ENCODE measurements at regions of chr3 and their contacts with region 1.

Region 1: DNA sequence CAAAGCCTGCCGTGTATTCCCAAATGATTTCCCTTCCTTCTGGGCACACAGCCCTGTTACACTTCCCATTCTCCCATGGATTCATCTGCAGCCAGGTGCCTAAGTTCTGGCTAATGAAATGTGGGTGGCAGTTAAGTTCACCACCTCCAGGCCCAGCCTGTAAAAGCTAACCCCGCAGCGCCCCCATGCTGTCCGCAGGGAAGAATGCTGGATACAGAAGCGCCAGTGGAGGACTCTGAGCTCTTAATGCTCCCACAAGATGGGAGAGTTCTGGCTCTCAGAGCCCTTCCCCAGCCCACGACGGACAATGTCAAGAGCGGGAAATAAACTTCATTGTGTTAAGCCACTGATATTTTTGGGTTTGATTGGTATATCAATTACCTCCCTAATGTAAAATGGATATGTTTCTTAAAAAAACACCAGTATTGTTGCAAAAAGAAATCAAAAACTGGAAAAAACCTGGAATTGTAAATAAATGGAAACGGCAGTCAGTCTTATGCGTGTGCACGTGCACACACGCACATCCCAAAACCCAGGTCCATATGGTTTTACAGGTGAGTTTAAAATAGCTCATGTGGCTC is 37.7 kb upstream of the FGD5 start:
- DNase-seq: peak; percentile 75
- ATAC-seq: peak; percentile 90

Region 2: GRCh38 chr3:14605067-14605466 is 175.9 kb before region 1 on chr3:
- intact Hi-C with region 1: no loop called
- DNase-seq: no peak
- ATAC-seq: no peak

Region 3: GRCh38 chr3:14672588-14672987 is 108.4 kb before region 1 on chr3:
- intact Hi-C with region 1: loop called (anchors 5 kb)
- DNase-seq: no peak
- ATAC-seq: no peak

Region 4: DNA sequence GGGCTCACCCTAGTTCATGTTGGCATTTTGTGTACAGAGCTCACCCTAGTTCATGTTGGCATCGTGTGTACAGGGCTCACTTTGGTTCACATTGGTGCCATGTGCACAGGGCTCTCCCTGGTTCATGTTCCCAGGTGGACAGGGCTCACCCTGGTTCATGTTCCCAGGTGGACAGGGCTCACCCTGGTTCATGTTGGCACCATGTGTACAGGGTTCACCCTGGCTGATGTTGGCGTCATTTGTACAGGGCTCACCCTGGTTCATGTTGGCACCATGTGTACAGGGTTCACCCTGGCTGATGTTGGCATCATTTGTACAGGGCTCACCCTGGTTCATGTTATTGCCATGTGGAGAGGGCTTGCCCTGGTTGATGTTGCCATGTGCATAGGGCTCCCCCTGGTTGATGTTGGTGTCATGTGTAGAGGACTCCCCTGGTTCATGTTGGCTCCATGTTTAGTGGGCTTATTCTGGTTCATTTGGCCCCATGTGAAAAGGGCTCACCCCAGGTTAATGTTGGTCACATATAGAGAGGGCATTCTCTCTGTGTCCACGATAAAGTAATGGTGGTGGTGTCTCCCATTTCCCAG is 134.7 kb after region 1 on chr3:
- intact Hi-C with region 1: loop called (anchors 10 kb)
- DNase-seq: no peak
- ATAC-seq: peak; percentile 34